B cell (primary cell): ENCODE measurements at regions of chr4 and their contacts with region 1.

Region 1: GRCh38 chr4:7042697-7043464 is at the start of gene TADA2B:
- DNase-seq: peak; percentile 95
- ATAC-seq: peak; percentile 87
- H3K4me3 ChIP-seq: peak within 1 kb of the TSS; percentile 51 to 96 (median 95)
- H3K4me3 Mint-ChIP-seq: peak within 1 kb of the TSS; percentile 97
- H3K27ac ChIP-seq: peak within 1 kb of the TSS; percentile 68 to 85
- H3K27ac Mint-ChIP-seq: peak within 1 kb of the TSS; percentile 92
- H3K4me1 ChIP-seq: peaks cover 31 to 48% of the 10 kb centered on the region in 2 donors
- H3K4me1 Mint-ChIP-seq: peaks cover 50% of the 10 kb centered on the region
- H3K27me3 ChIP-seq: no peaks in the 10 kb centered on the region
- H3K27me3 Mint-ChIP-seq: no peaks in the 10 kb centered on the region
- CTCF ChIP-seq: peak; percentile 27
- total RNA-seq, gene TADA2B: 38.5 and 41.5 TPM in 2 replicates

Region 2: DNA sequence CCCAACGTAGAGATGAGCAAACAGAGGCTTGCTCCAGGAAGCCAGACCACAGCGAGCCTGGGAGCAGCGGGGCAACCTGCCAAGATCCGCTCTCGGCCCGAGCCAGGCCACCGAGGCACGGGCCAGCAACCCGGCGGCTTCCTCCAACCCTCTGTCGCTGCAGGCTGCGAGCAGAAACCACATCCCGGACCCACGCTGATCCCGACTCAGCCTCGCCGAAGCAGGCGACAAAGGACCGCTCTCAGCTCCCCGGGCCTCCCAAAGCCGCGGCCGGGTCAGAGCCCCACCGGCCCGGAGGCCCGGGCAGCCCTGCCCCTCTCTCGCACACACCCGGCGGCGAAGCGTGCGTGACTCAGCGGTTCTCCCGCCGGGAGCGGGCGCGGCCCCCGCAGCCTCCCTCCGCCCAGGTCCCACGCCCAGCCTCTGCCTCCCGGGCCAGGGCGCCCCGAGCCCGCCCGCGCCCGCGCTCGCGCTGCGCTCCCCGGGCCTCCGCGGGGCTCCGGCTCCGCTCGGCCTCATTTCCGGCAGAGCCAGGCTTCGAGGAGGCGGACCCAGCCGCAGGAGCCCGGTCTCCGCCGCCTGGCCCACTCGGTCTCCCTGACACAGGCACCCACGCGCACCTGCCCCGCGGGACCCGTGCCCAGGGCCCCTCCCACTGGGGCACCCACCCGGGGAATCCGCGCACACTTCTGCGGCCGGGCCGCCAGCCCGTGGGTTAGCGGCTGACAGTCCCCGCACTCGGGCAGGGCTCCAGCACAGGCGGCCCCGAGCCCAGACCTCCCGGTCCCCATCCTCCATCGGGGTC is 572.2 kb before region 1 on chr4:
- CTCF ChIA-PET with region 1: no interaction called
- POLR2A ChIA-PET with region 1: no interaction called
- intact Hi-C with region 1: no loop called
- DNase-seq: no peak
- ATAC-seq: no peak
- H3K4me3 ChIP-seq: no peak overlapping the region
- H3K4me3 Mint-ChIP-seq: no peak overlapping the region
- H3K27ac ChIP-seq: no peak overlapping the region
- H3K27ac Mint-ChIP-seq: no peak overlapping the region
- H3K4me1 ChIP-seq: no peaks in the 10 kb centered on the region
- H3K4me1 Mint-ChIP-seq: peaks cover 8% of the 10 kb centered on the region
- H3K27me3 ChIP-seq: peaks cover 0 to 43% (median 4%) of the 10 kb centered on the region in 4 experiments
- H3K27me3 Mint-ChIP-seq: peaks cover 56% of the 10 kb centered on the region
- CTCF ChIP-seq: no peak

Region 3: DNA sequence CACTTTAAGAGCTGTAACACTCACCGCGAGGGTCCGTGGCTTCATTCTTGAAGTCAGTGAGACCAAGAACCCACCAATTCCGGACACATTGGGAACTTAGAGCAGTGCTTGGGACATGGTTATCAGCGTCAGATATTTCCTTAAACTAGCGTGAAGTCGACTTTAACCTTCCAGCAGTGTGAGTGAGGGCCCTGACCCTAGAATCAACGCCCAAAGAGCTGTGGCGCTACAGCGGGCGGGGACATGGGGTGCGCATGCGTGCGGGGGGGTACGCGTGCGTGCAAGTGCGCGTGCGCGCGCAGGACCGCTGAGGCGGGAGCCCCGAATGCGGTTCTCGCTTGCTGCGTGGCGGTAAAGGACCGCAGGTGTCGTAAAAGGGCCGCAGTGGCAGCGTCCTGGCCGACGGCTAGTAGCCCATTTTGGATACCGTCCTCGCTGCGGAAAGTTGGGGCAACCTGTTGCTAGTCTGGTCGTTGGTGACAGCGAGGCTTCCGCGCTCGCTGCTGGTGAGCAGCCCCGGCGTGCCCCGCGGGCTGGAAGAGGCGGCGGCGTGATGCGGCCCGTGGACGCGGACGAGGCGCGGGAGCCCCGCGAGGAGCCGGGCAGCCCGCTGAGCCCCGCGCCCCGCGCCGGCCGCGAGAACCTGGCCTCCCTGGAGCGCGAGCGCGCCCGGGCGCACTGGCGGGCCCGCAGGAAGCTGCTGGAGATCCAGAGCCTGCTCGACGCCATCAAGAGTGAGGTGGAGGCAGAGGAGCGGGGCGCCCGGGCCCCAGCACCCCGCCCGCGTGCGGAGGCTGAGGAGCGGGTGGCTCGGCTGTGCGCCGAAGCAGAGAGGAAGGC is 369.0 kb before region 1 on chr4:
- CTCF ChIA-PET with region 1: interaction called, 3 read pairs
- POLR2A ChIA-PET with region 1: no interaction called
- intact Hi-C with region 1: loop called (anchors 1 kb)
- DNase-seq: peak; percentile 97
- ATAC-seq: peak; percentile 89
- H3K4me3 ChIP-seq: peak overlapping the region; percentile 22 to 82 (median 63)
- H3K4me3 Mint-ChIP-seq: peak overlapping the region; percentile 91
- H3K27ac ChIP-seq: peak overlapping the region; percentile 67 to 71
- H3K27ac Mint-ChIP-seq: peak overlapping the region; percentile 99
- H3K4me1 ChIP-seq: peaks cover 27 to 35% of the 10 kb centered on the region in 2 donors
- H3K4me1 Mint-ChIP-seq: peaks cover 43% of the 10 kb centered on the region
- H3K27me3 ChIP-seq: no peaks in the 10 kb centered on the region
- H3K27me3 Mint-ChIP-seq: no peaks in the 10 kb centered on the region
- CTCF ChIP-seq: no peak

Region 4: DNA sequence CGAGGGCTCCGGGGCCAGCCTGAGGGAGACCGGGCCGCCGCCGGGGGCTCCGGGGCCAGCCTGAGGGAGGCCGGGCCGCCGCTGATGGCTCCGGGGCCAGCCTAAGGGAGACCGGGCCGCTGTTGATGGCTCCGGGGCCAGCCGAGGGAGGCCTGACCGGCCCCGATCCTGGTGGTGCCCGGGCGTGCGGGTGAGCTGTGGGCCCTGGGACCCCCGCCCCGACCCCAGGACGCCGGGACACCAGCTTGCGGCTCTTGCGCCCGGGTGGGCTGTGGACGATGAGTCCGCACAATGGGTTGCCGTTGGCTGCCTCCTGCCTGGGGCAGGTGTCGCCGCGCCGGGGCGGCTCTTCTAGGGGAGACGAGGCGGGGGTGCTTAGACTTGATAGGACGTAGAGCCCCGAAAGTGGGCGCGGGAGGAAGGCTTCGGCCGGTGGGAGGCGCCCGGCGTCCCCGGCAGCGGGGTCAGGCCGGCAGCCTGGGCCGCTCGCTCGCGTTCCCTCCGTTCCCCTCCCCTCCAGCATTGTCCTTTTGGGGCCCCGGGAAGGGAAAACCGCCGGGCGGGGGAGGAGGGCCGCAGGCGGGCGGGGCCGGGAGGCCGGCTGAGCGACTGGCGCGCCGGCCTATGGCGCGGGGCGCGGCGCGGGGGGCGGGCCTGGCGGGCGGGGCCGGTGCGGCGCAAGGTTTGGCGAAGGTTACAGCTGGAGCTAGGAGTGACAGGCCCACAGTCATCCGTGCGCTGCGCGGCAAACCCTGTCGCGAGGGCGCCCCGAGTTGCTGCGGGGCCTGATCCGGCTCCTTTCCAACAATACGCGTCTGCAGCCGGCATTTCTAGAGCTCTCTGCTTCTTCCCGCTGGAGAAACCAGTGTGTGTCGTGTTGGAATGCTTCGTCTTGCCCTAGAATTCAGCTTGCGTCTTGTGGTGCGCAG is 259.6 kb before region 1 on chr4:
- CTCF ChIA-PET with region 1: no interaction called
- POLR2A ChIA-PET with region 1: interaction called, 3 read pairs
- intact Hi-C with region 1: loop called (anchors 1 kb)
- DNase-seq: peak; percentile 92
- ATAC-seq: peak; percentile 62
- H3K4me3 ChIP-seq: peak overlapping the region; percentile 35 to 90 (median 80)
- H3K4me3 Mint-ChIP-seq: peak overlapping the region; percentile 87
- H3K27ac ChIP-seq: peak overlapping the region; percentile 88 to 97
- H3K27ac Mint-ChIP-seq: peak overlapping the region; percentile 87
- H3K4me1 ChIP-seq: peaks cover 11 to 13% of the 10 kb centered on the region in 2 donors
- H3K4me1 Mint-ChIP-seq: peaks cover 28% of the 10 kb centered on the region
- H3K27me3 ChIP-seq: no peaks in the 10 kb centered on the region
- H3K27me3 Mint-ChIP-seq: no peaks in the 10 kb centered on the region
- CTCF ChIP-seq: peak; percentile 7

Region 5: GRCh38 chr4:6909073-6909965 is 133.6 kb before region 1 on chr4 and contains the start of gene TBC1D14:
- CTCF ChIA-PET with region 1: interaction called, 12 read pairs
- POLR2A ChIA-PET with region 1: interaction called, 12 read pairs
- intact Hi-C with region 1: loop called (anchors 1 kb)
- DNase-seq: peak; percentile 94
- ATAC-seq: peak; percentile 89
- H3K4me3 ChIP-seq: peak within 1 kb of the TSS; percentile 72 to 85 (median 78)
- H3K4me3 Mint-ChIP-seq: peak within 1 kb of the TSS; percentile 95
- H3K27ac ChIP-seq: peak within 1 kb of the TSS; percentile 93 to 97
- H3K27ac Mint-ChIP-seq: peak within 1 kb of the TSS; percentile 94
- H3K4me1 ChIP-seq: peaks cover 33 to 43% of the 10 kb centered on the region in 2 donors
- H3K4me1 Mint-ChIP-seq: peaks cover 38% of the 10 kb centered on the region
- H3K27me3 ChIP-seq: peaks cover 0 to 3% (median 0%) of the 10 kb centered on the region in 4 experiments
- H3K27me3 Mint-ChIP-seq: peaks cover 8% of the 10 kb centered on the region
- CTCF ChIP-seq: no peak
- total RNA-seq, gene TBC1D14: 42.0 and 44.1 TPM in 2 replicates

Region 6: GRCh38 chr4:6974138-6974848 is 68.6 kb before region 1 on chr4:
- CTCF ChIA-PET with region 1: interaction called, 8 read pairs
- POLR2A ChIA-PET with region 1: interaction called, 3 read pairs
- intact Hi-C with region 1: loop called (anchors 1 kb)
- DNase-seq: peak; percentile 84
- ATAC-seq: peak; percentile 90
- H3K4me3 ChIP-seq: no peak overlapping the region
- H3K4me3 Mint-ChIP-seq: no peak overlapping the region
- H3K27ac ChIP-seq: no peak overlapping the region
- H3K27ac Mint-ChIP-seq: no peak overlapping the region
- H3K4me1 ChIP-seq: peaks cover 31 to 35% of the 10 kb centered on the region in 2 donors
- H3K4me1 Mint-ChIP-seq: peaks cover 33% of the 10 kb centered on the region
- H3K27me3 ChIP-seq: no peaks in the 10 kb centered on the region
- H3K27me3 Mint-ChIP-seq: no peaks in the 10 kb centered on the region
- CTCF ChIP-seq: peak; percentile 96

Region 7: DNA sequence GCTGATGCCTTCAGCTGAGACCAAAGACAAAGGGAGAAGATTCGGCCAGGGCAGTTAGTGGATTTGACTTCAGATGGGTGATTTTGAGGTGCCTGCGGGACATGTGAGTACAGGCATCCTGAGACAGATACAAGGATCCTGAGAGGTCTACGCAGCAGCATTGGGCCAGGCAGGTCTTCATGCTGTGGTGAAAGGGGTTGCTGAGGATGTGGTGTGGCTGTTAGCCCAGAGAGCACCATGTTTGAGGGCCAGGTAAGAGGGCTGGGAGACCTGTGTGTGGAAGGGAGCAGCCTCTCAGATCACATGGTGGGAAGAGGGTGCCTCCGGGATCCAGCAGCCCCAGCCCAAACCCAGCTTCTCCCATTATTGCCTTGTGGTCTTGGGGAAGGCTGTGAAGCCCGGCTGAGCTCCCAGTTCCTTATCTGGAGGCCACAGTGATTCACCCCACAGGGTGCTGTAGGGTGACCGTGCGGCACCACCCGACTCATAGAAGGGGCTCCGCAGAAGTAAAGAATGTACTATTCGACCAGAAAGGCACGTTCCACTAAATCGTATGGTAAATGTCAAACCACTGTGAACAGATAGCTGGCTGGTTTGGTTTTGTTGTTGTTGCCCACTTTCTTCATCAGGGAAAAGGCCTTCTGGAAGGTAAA is 27.4 kb before region 1 on chr4:
- CTCF ChIA-PET with region 1: interaction called, 7 read pairs
- POLR2A ChIA-PET with region 1: interaction called, 3 read pairs
- intact Hi-C with region 1: loop called (anchors 2 kb)
- DNase-seq: no peak
- ATAC-seq: no peak
- H3K4me3 ChIP-seq: no peak overlapping the region
- H3K4me3 Mint-ChIP-seq: no peak overlapping the region
- H3K27ac ChIP-seq: no peak overlapping the region
- H3K27ac Mint-ChIP-seq: peak overlapping the region; percentile 56
- H3K4me1 ChIP-seq: peaks cover 13 to 18% of the 10 kb centered on the region in 2 donors
- H3K4me1 Mint-ChIP-seq: peaks cover 23% of the 10 kb centered on the region
- H3K27me3 ChIP-seq: no peaks in the 10 kb centered on the region
- H3K27me3 Mint-ChIP-seq: no peaks in the 10 kb centered on the region
- CTCF ChIP-seq: no peak

Region 8: GRCh38 chr4:7101692-7102515 is 59.0 kb after region 1 on chr4:
- CTCF ChIA-PET with region 1: no interaction called
- POLR2A ChIA-PET with region 1: no interaction called
- intact Hi-C with region 1: loop called (anchors 1 kb)
- DNase-seq: peak; percentile 66
- ATAC-seq: peak; percentile 51
- H3K4me3 ChIP-seq: peak overlapping the region in 4 of 5 experiments; percentile 15 to 84 (median 72)
- H3K4me3 Mint-ChIP-seq: peak overlapping the region; percentile 91
- H3K27ac ChIP-seq: no peak overlapping the region
- H3K27ac Mint-ChIP-seq: peak overlapping the region; percentile 61
- H3K4me1 ChIP-seq: peaks cover 21 to 25% of the 10 kb centered on the region in 2 donors
- H3K4me1 Mint-ChIP-seq: peaks cover 19% of the 10 kb centered on the region
- H3K27me3 ChIP-seq: peaks cover 0 to 9% (median under 1%) of the 10 kb centered on the region in 4 experiments
- H3K27me3 Mint-ChIP-seq: peaks cover 12% of the 10 kb centered on the region
- CTCF ChIP-seq: peak; percentile 74